CD4-positive, alpha-beta memory T cell (primary cell): ENCODE measurements at regions of chr5 and their contacts with region 1.

Region 1: DNA sequence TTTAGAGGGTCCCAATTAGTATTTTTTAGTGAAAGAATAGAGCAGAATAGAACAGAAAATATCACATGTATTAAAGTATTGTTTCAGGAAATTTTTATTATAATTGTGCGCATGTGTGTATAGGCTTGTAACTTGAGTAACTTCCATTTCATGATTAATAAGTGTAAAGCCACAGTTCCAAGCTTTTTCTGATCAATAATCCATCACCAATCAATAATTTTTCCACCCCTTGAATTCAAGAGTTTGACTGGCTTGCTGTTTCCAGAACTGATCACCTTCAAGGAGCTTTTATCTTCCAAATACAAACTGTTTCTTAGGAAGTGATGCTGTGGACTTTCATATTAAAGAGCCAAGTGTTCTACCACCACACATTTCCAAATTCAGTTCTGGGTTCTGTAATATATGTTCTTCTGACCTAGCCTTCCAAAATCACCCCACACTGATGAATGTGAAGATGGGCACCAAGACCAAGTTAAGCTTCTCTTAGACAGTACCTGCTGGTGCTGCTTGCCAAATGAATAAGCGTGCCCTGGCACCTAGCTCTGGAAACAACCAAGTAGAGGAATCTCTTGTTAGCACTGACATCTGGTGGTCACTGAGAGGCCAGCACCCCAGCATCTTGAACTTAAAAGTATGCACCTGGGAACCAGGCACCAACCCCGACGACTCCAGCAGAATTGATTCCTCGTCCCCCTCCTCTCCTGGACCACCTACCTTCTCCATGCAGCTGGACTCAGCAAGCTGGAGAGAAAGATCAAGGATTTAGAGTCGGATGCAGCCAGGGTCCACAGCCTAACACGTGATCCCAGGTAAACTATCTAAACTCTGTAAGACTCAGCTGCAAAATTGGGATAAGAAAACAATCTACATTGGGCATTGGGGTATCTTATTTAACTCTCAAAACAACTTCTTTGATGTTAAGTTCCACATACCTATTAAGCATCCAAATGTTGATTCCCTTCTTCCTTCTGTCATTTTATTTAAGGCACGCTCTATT is 89.6 kb downstream of the SLC1A3 start:
- DNase-seq: peak in 3 of 5 donors; percentile 10 to 37 (median 12)
- H3K4me3 ChIP-seq: no peak overlapping the region
- H3K4me3 Mint-ChIP-seq: no peak overlapping the region
- H3K27ac ChIP-seq: no peak overlapping the region
- H3K27ac Mint-ChIP-seq: no peak overlapping the region
- H3K4me1 ChIP-seq: no peaks in the 10 kb centered on the region
- H3K4me1 Mint-ChIP-seq: peaks cover 0 to 4% (median under 1%) of the 10 kb centered on the region in 4 donors
- H3K27me3 ChIP-seq: no peaks in the 10 kb centered on the region
- H3K27me3 Mint-ChIP-seq: peaks cover 6 to 13% of the 10 kb centered on the region in 2 donors

Region 2: GRCh38 chr5:36373527-36374086 is 322.4 kb before region 1 on chr5:
- CTCF ChIA-PET with region 1: no interaction called
- POLR2A ChIA-PET with region 1: no interaction called
- intact Hi-C with region 1: no loop called
- DNase-seq: no peak
- H3K4me3 ChIP-seq: no peak overlapping the region
- H3K4me3 Mint-ChIP-seq: no peak overlapping the region
- H3K27ac ChIP-seq: no peak overlapping the region
- H3K27ac Mint-ChIP-seq: no peak overlapping the region
- H3K4me1 ChIP-seq: no peaks in the 10 kb centered on the region
- H3K4me1 Mint-ChIP-seq: no peaks in the 10 kb centered on the region
- H3K27me3 ChIP-seq: no peaks in the 10 kb centered on the region
- H3K27me3 Mint-ChIP-seq: peaks cover 2 to 6% of the 10 kb centered on the region in 2 donors

Region 3: GRCh38 chr5:36706662-36707061 is 10.7 kb after region 1 on chr5:
- CTCF ChIA-PET with region 1: interaction called, 28 read pairs
- POLR2A ChIA-PET with region 1: no interaction called
- intact Hi-C with region 1: no loop called
- DNase-seq: no peak
- H3K4me3 ChIP-seq: no peak overlapping the region
- H3K4me3 Mint-ChIP-seq: no peak overlapping the region
- H3K27ac ChIP-seq: no peak overlapping the region
- H3K27ac Mint-ChIP-seq: no peak overlapping the region
- H3K4me1 ChIP-seq: no peaks in the 10 kb centered on the region
- H3K4me1 Mint-ChIP-seq: no peaks in the 10 kb centered on the region
- H3K27me3 ChIP-seq: no peaks in the 10 kb centered on the region
- H3K27me3 Mint-ChIP-seq: peaks cover 6 to 8% of the 10 kb centered on the region in 2 donors

Region 4: GRCh38 chr5:36882250-36882649 is 186.3 kb after region 1 on chr5:
- CTCF ChIA-PET with region 1: no interaction called
- POLR2A ChIA-PET with region 1: no interaction called
- intact Hi-C with region 1: no loop called
- DNase-seq: no peak
- H3K4me3 ChIP-seq: no peak overlapping the region
- H3K4me3 Mint-ChIP-seq: peak overlapping the region in 7 of 8 donors; percentile 0 to 67 (median 49)
- H3K27ac ChIP-seq: no peak overlapping the region
- H3K27ac Mint-ChIP-seq: peak overlapping the region in 3 of 7 donors; percentile 12 to 82 (median 29)
- H3K4me1 ChIP-seq: peaks cover 76% of the 10 kb centered on the region
- H3K4me1 Mint-ChIP-seq: peaks cover 51 to 70% (median 61%) of the 10 kb centered on the region in 4 donors
- H3K27me3 ChIP-seq: no peaks in the 10 kb centered on the region
- H3K27me3 Mint-ChIP-seq: no peaks in the 10 kb centered on the region